Posterior vena cava (tissue), 2 donors: ENCODE measurements at regions of chr13 and their contacts with region 1.

Region 1: DNA sequence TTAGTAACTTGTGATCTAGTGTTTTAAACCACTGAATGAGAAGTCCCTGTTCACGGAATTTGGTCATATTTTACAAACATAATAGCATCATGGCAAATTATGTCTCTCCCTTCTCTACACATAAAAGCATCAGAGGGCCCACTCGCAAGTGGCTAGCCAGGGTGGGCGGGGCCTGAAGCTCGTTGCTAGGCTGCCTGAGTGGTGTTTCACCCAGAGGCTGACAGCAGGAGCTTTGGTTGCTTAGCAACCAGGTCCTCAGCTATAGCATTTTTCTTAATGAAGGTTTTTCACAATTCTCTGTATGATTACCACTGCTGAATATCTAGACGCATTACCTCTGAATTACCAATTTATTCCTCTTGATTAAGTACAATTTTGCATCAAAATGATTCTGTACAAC is 126.5 kb downstream of the NALCN start:
- DNase-seq: no peak

Region 2: DNA sequence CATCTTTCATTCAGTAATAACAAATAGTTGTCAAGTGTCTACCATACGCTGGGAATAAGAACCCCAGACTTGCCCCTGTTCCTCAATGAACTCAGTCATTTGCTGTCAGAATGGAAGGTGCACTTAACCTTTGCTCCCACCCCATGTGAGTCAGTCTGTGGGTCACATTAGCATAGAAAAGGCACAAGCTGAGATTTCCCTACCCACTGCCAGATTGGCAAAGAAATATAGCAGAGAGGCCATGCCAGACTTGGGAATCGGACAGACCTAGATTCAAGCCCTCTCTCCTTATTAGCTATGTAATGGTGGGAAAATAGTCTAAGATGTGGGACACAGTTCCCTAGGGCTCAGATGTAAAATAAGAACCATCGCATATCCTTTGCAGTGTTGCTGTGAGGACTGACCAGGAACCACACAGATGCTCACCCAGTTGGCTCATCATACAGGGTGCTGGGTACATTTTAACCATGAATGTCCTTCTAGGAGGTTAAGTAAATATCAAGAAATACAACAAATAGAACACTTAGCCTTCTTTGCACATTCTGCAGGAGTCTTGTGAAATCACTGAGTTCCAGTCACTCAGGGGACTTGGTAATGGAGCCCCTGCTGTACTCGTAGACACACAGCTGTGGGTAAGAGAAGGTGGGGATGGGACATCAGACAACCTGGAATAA is 893.9 kb after region 1 on chr13:
- intact Hi-C with region 1: loop called in 1 of 2 experiments (anchors 10 kb)
- DNase-seq: no peak

Region 3: DNA sequence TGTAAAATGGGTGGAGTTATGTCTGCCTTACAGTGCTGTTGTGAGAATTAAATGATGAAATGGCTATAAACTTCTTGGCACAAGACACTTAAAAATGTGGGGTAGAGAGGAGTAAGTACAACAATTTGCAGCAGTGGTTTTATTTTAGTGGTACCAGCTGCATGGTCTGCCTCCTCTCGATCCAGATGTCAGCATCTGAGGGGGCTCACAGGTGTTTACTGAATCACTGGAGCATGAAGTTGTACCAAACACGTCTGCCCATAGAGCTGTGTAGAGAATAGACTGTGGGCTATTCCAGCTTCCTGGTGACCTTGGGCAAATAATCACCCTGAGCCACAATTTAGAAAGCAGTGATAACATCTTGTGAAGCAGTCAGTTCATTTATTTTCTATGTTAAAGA is 1765.4 kb after region 1 on chr13:
- intact Hi-C with region 1: no loop called
- DNase-seq: no peak